HAP-1 (cell line): ENCODE measurements at regions of chr7 and their contacts with region 1.

Region 1: GRCh38 chr7:83655951-83656556 is 7.1 kb upstream of the SEMA3E start:
- DNase-seq: peak; percentile 60 to 67
- H3K4me3 ChIP-seq: no peak overlapping the region
- H3K4me1 ChIP-seq: 0 out of 2 replicates have a peak, but pooled peaks cover 2% of the 10 kb centered on the region
- H3K27me3 ChIP-seq: no peaks in the 10 kb centered on the region

Region 2: GRCh38 chr7:83410989-83411591 is 245.0 kb before region 1 on chr7:
- in situ Hi-C with region 1: loop called (anchors 25 kb)
- DNase-seq: peak; percentile 56 to 69
- H3K4me3 ChIP-seq: no peak overlapping the region
- H3K4me1 ChIP-seq: peaks cover 8% of the 10 kb centered on the region
- H3K27me3 ChIP-seq: no peaks in the 10 kb centered on the region

Region 3: GRCh38 chr7:83701736-83702135 is 45.7 kb after region 1 on chr7:
- in situ Hi-C with region 1: no loop called
- DNase-seq: no peak
- H3K4me3 ChIP-seq: no peak overlapping the region
- H3K4me1 ChIP-seq: peaks cover 38% of the 10 kb centered on the region
- H3K27me3 ChIP-seq: no peaks in the 10 kb centered on the region